Right ventricle myocardium superior (tissue), 1 donor: ENCODE measurements at regions of chr21 and their contacts with region 1.

Region 1: DNA sequence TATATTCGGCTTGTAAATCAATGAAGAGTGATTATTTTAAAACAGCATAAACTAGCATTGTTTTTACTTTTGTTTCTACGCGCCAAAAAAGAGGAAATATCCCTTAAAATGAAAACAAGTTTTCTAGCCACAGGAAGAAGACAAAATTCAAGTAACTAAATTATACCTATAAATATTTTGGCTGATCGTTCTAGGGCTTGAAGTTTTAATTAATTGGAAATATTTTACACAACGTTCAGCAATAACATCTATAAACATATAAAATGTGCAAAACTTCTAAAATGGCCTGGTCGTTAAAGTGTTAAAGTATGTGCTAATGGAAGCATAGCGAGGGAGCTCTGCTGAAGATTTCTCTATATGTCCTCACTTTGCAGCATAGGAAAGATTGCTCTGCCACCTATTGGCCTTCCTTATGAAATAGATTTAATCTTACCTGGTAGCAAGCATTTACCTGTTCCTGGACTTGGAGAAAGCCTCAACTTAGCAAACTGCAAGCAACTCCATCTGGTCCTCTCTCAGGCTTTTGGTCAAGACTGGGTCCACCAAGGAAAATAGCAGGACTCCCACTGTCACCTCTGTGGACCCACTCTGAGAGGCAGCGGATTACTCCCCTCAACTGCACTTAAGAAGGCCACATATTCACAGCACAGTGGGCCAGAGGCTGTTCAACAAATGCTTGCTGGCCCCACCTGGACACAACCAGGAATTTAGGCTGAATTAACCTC is 351.3 kb upstream of the RUNX1 start:
- DNase-seq: no peak
- ATAC-seq: peak; percentile 59

Region 2: GRCh38 chr21:35051287-35051818 is 349.0 kb before region 1 on chr21:
- intact Hi-C with region 1: loop called (anchors 5 kb)
- DNase-seq: peak; percentile 92
- ATAC-seq: peak; percentile 95

Region 3: DNA sequence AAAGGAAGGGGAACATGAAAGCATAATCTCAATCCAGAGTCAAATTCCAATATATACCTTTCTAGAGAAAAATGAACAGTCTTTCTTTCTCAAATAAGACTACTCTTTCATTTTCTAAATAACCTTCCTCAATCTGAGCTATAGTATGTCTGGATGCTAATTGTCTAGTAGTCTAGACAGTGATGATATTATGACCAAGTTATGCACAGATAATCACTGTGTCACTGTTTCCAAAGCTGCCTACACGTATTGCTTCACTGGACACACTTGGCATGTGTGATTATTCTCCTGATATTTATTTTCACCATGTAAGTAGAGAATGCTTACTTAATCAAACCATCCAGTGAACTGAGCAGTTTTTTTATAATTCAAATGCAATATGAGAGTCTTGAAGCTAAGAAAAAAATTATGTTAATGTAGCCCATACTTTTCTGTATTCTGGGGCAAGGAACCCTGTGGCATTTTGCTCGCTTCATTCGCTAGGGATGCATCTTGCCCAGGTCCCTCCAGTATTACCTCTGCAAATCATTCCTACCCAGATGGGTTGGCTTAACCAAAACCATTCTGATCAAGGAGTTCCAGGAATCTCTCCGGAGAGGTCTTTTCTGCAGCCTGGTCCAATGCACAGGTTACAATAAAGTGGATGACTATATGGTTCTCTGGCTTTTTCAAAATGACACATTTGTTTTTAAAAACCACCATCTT is 48.2 kb before region 1 on chr21:
- intact Hi-C with region 1: no loop called
- DNase-seq: no peak
- ATAC-seq: no peak